ENCODE measurements at regions of chr12 and their contacts with region 1.

Region 1: GRCh38 chr12:21631367-21631766 is 26.3 kb downstream of the LDHB start:
- DNase-seq: no peak
- H3K4me3 Mint-ChIP-seq: no peak overlapping the region
- H3K27ac Mint-ChIP-seq: no peak overlapping the region
- H3K4me1 Mint-ChIP-seq: peaks cover 3% of the 10 kb centered on the region
- H3K27me3 Mint-ChIP-seq: no peaks in the 10 kb centered on the region

Region 2: DNA sequence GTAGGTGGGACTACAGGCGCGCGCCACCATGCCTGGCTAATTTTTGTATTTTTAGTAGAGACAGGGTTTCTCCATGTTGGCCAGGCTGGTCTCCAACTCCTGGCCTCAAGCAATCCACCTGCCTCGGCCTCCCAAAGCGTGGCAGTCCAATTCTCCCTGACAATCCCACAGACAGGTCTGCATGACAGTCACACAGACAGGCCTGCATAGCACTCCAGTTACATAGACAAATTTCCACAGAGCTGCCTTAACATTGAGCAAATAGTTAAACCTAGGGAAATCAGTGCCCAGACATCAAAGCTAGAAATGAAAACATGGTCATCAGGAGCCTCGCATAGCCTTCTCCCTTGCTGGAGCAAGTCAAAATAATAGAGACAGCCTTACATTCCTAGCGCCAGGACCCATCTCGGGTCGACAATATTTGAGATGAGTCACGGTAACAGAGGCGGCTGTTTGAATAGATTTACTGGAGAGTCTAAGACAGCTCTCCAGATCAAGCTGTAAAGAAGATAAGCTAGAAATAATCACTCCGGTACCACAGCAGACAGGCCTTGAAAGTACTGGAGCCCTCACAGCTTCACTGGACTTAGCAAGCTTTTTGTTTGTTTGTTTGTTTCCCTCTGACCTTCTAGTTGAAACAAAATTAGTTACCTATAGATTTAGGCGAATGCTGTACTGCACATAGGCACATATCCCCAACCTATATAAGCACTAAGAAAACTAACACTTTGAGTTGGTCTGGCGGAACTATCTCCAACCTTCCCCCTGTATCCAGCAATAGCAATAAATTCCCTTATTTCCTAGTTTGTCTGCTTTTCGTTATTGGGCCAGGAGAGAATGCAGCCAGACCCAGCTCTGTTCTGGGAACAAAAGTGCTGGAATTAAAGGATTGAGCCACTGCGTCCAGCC is 217.7 kb before region 1 on chr12:
- intact Hi-C with region 1: no loop called
- DNase-seq: no peak
- H3K4me3 Mint-ChIP-seq: no peak overlapping the region
- H3K27ac Mint-ChIP-seq: no peak overlapping the region
- H3K4me1 Mint-ChIP-seq: no peaks in the 10 kb centered on the region
- H3K27me3 Mint-ChIP-seq: peaks cover 31% of the 10 kb centered on the region

Region 3: GRCh38 chr12:21613931-21614330 is 17.4 kb before region 1 on chr12:
- intact Hi-C with region 1: loop called (anchors 2 kb)
- DNase-seq: no peak
- H3K4me3 Mint-ChIP-seq: no peak overlapping the region
- H3K27ac Mint-ChIP-seq: no peak overlapping the region
- H3K4me1 Mint-ChIP-seq: peaks cover 40% of the 10 kb centered on the region
- H3K27me3 Mint-ChIP-seq: no peaks in the 10 kb centered on the region

Measured in activated T-helper 2 cell treated with anti-CD3 and anti-CD28 coated beads, Interferon-gamma antibody, Interleukin-2, Interleukin-4, amounts not matched to agents 10 μg/mL and 5 μg/mL and 100 μg/mL, durations not matched to agents 14 hours and 24 hours and 36 hours (primary cell).